Activated CD8-positive, alpha-beta T cell treated with anti-CD3 and anti-CD28 coated beads for 36 hours (primary cell): ENCODE measurements at regions of chr14 and their contacts with region 1.

Region 1: DNA sequence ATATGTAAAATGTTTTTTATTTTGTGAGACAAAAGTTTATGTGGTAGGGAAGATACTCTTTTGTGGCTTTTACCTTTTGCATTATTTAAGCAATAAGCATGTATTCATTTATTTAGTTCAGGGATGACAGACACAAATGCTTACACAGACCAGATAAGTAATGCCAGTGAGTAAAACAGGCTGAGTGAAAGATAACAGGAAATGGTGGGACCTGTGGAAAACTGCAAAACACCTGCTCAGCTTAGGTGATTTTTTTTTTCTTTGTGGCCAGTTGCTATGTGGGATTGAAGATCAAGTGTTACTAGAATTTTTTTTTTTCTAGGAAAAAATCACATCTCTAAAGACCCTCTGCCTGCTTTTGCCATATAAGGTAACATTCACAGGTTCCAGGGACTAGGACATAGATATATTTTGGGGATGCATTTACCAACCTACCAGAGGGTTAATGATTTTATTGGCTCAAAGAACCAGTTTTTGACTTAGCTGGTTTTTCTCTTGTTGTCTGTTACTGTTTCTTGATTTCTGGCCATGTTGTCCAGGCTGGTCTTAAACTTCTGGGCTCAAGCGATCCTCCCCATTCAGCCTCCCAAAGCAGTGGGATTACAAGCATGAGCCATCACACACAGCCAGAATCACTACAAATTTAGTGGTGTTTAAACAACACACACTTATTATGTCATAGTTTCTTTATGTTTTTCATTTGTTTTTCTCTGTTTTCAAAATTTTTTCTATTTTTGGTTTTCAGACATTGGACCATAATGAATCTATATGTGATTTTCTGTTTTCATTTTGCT is 9.8 kb downstream of the PSMA6 start:
- DNase-seq: no peak
- ATAC-seq: peak; percentile 63
- H3K4me3 Mint-ChIP-seq: peak overlapping the region; percentile 24
- H3K27ac Mint-ChIP-seq: peak overlapping the region; percentile 77
- H3K4me1 Mint-ChIP-seq: peaks cover 55% of the 10 kb centered on the region
- H3K27me3 Mint-ChIP-seq: no peaks in the 10 kb centered on the region
- CTCF ChIP-seq: no peak

Region 2: DNA sequence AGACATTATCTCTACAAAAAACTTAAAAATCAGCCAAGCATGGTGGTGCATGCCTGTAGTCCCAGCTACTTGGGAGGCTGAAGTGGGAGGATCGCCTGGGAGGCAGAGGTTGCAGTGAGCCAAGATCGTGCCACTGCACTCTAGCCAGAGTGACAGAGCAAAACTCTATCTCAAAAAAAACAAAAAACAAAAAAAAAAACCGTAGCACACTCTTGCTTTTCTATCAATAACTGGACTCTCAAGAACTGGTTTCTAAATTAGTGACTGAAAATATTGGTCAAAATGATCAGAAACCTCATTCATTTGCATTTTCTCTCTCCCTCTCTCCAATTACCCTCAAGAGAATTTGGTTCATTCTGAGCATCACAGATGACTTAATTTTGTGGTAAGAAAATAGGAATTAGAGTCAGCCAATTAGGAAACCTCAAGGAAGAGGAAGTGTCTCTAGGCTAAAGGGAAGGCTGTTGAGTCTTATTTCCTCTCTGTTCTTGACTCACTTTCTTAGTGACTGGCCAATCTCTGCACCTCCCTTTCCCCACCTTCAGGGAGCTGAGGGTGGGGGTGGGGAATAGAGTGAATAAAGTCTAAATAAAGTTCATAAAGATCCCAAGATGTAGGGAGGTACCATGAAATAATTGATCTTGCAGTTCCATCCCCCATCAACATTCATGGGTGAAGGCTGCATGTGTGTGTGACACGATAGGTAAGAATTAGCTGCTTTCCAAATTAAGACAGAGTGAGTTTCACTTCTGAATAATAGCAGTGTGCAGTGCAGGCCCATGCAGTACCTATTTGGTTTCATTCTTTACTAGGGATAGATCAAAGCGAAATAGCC is 16.5 kb before region 1 on chr14:
- CTCF ChIA-PET with region 1: interaction called, 3 read pairs
- POLR2A ChIA-PET with region 1: interaction called, 13 read pairs
- intact Hi-C with region 1: no loop called
- DNase-seq: peak; percentile 54
- ATAC-seq: peak; percentile 63
- H3K4me3 Mint-ChIP-seq: peak overlapping the region; percentile 51
- H3K27ac Mint-ChIP-seq: peak overlapping the region; percentile 97
- H3K4me1 Mint-ChIP-seq: peaks cover 50% of the 10 kb centered on the region
- H3K27me3 Mint-ChIP-seq: no peaks in the 10 kb centered on the region
- CTCF ChIP-seq: no peak

Region 3: GRCh38 chr14:35320472-35320871 is 18.5 kb after region 1 on chr14:
- CTCF ChIA-PET with region 1: interaction called, 3 read pairs
- POLR2A ChIA-PET with region 1: interaction called, 12 read pairs
- intact Hi-C with region 1: no loop called
- DNase-seq: no peak
- ATAC-seq: no peak
- H3K4me3 Mint-ChIP-seq: no peak overlapping the region
- H3K27ac Mint-ChIP-seq: no peak overlapping the region
- H3K4me1 Mint-ChIP-seq: peaks cover 3% of the 10 kb centered on the region
- H3K27me3 Mint-ChIP-seq: no peaks in the 10 kb centered on the region
- CTCF ChIP-seq: no peak